Right ventricle myocardium inferior (tissue), 1 donor: ENCODE measurements at regions of chr2 and their contacts with region 1.

Region 1: GRCh38 chr2:234135720-234136221 is 85.3 kb downstream of the SPP2 start:
- DNase-seq: peak; percentile 74
- ATAC-seq: peak; percentile 56

Region 2: DNA sequence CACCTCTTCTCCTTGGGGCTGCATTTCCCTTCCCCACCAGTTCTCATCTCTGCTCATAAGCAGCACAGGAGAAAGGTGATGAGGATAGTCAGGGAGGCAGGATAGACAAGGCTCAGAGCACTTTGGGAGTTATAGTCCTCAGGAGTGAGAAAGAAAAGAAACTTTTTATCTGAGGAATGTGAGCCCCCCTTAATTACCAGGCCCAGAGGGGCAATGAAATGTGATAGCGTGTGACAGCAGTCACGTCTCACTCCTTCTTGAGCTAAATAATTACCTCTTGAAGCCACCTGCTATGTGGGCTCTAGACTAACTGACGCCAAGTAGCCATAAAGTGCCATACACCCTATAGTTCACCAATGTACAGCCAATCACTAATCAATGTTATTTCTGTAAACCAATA is 20.6 kb after region 1 on chr2:
- intact Hi-C with region 1: no loop called
- DNase-seq: no peak
- ATAC-seq: no peak

Region 3: GRCh38 chr2:234191819-234192407 is 56.1 kb after region 1 on chr2:
- intact Hi-C with region 1: no loop called
- DNase-seq: no peak
- ATAC-seq: no peak

Region 4: DNA sequence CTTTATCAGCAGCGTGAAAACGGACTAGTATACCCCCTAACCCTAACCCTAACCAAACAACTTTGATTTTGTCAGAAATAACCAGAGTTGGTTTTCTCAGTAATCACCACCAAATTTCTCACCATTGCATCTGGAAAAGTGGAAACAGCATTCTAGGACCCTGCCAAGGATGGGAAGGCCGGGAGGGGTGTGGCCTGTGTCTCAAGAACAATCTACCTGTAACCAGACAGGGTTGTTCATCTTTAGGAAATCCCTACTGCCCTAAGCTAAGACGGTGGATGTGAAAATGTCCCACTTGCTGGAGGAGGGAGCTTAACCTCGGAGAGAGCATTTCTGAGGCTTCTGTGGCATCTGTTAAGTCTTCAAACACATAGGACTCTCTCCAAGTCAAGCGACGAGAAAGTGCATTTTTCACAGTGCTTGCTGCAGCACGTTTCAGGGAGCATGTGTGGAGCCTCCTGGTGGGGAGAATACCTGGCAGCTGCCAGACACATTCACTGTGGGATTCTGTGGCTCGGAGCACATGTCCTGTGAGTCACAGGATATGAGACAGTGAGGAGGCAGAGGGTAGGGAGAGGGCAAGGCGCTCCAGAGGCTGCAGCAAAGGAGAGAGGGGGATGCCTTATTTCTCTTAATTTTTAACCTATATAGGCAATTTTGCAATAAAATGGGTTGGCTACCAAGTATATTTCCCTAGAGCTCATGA is 122.2 kb after region 1 on chr2:
- intact Hi-C with region 1: loop called (anchors 10 kb)
- DNase-seq: no peak
- ATAC-seq: peak; percentile 31

Region 5: GRCh38 chr2:234288974-234289455 is 153.2 kb after region 1 on chr2:
- intact Hi-C with region 1: loop called (anchors 5 kb)
- DNase-seq: no peak
- ATAC-seq: peak; percentile 40

Region 6: DNA sequence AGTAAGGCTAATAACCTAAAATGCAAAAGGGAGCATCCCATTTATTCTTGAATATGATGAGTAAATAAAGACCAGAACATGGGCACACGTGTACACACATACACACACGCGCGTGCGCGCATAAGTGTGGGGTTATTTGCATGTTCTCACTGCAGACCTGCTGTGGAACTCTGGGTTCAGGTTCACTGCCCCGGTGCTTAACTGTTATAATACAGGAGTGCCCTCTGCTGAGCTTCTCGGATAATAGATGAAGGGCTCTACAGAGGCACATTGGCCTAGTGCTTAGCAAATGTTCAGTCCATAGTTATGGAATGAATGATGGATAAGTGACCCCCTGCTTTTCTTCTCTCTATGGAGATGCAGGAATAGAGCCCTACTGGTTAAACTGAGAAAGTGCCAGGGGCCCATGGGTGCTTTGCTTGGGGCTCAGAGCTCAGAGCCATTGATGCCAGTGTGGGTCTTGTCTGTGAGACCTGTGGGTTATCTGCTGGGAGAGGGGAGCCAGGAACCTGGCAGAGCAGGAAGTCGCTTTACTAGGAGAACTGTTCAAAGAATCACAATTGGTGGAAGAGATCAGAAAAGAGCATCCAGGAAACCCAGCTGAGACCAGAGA is 364.7 kb after region 1 on chr2:
- intact Hi-C with region 1: loop called (anchors 2 kb)
- DNase-seq: peak; percentile 75
- ATAC-seq: peak; percentile 44

Region 7: GRCh38 chr2:235116885-235117492 is 981.2 kb after region 1 on chr2:
- intact Hi-C with region 1: loop called (anchors 10 kb)
- DNase-seq: no peak
- ATAC-seq: no peak